ENCODE measurements at regions of chr4 and their contacts with region 1.

Region 1: GRCh38 chr4:46329118-46329976 is 60.6 kb downstream of the GABRA2 start:
- DNase-seq: peak; percentile 54 to 73
- H3K4me3 ChIP-seq: no peak overlapping the region
- H3K4me3 Mint-ChIP-seq: no peak overlapping the region
- H3K27ac Mint-ChIP-seq: no peak overlapping the region
- H3K4me1 ChIP-seq: no peaks in the 10 kb centered on the region
- H3K4me1 Mint-ChIP-seq: no peaks in the 10 kb centered on the region
- H3K27me3 ChIP-seq: no peaks in the 10 kb centered on the region
- H3K27me3 Mint-ChIP-seq: no peaks in the 10 kb centered on the region
- CTCF ChIP-seq: peak; percentile 66 to 69

Region 2: GRCh38 chr4:46648088-46648744 is 318.9 kb after region 1 on chr4:
- CTCF ChIA-PET with region 1: interaction called, 152 read pairs
- POLR2A ChIA-PET with region 1: no interaction called
- intact Hi-C with region 1: loop called (anchors 1 kb)
- DNase-seq: peak; percentile 80 to 82
- H3K4me3 ChIP-seq: no peak overlapping the region
- H3K4me3 Mint-ChIP-seq: no peak overlapping the region
- H3K27ac Mint-ChIP-seq: peak overlapping the region; percentile 71
- H3K4me1 ChIP-seq: peaks cover 7% of the 10 kb centered on the region
- H3K4me1 Mint-ChIP-seq: no peaks in the 10 kb centered on the region
- H3K27me3 ChIP-seq: no peaks in the 10 kb centered on the region
- H3K27me3 Mint-ChIP-seq: no peaks in the 10 kb centered on the region
- CTCF ChIP-seq: peak; percentile 73 to 78

Region 3: GRCh38 chr4:46886711-46887110 is 557.4 kb after region 1 on chr4:
- CTCF ChIA-PET with region 1: interaction called, 3 read pairs
- POLR2A ChIA-PET with region 1: no interaction called
- intact Hi-C with region 1: loop called (anchors 5 kb)
- DNase-seq: peak in 1 of 2 experiments; percentile 32
- H3K4me3 ChIP-seq: no peak overlapping the region
- H3K4me3 Mint-ChIP-seq: no peak overlapping the region
- H3K27ac Mint-ChIP-seq: peak overlapping the region; percentile 72
- H3K4me1 ChIP-seq: peaks cover 49% of the 10 kb centered on the region
- H3K4me1 Mint-ChIP-seq: peaks cover 29% of the 10 kb centered on the region
- H3K27me3 ChIP-seq: no peaks in the 10 kb centered on the region
- H3K27me3 Mint-ChIP-seq: no peaks in the 10 kb centered on the region
- CTCF ChIP-seq: peak; percentile 29 to 32

Region 4: GRCh38 chr4:47122592-47123291 is 793.4 kb after region 1 on chr4:
- CTCF ChIA-PET with region 1: interaction called, 11 read pairs
- POLR2A ChIA-PET with region 1: no interaction called
- intact Hi-C with region 1: no loop called
- DNase-seq: peak; percentile 69 to 80
- H3K4me3 ChIP-seq: no peak overlapping the region
- H3K4me3 Mint-ChIP-seq: no peak overlapping the region
- H3K27ac Mint-ChIP-seq: no peak overlapping the region
- H3K4me1 ChIP-seq: no peaks in the 10 kb centered on the region
- H3K4me1 Mint-ChIP-seq: no peaks in the 10 kb centered on the region
- H3K27me3 ChIP-seq: no peaks in the 10 kb centered on the region
- H3K27me3 Mint-ChIP-seq: no peaks in the 10 kb centered on the region
- CTCF ChIP-seq: peak; percentile 70 to 82

Measured in Caco-2 (cell line).